Cardiac septum (tissue), 1 donor: ENCODE measurements at regions of chr21 and their contacts with region 1.

Region 1: GRCh38 chr21:20999659-21000058 is 1.4 kb downstream of the NCAM2 start:
- DNase-seq: no peak

Region 2: GRCh38 chr21:21101911-21102310 is 102.3 kb after region 1 on chr21:
- intact Hi-C with region 1: loop called (anchors 5 kb)
- DNase-seq: no peak

Region 3: DNA sequence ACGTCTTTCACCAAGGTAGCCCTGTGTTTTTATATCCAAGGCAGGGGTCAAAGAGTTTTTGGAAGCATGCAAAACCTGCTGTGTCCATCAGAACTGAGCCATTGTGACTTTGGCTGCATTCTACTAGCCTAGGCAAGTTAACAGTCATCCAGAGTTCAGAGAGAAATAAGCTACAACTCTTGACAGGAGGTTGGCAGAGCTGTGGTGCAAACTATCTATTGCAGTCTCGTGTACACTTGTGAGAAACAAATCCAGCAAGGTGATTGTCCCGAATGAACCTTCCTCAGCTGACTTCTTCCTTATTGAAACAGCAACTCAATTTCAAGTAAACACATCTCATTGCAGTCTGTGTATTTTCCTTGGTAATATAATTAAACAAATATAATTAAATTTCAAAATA is 123.0 kb after region 1 on chr21:
- intact Hi-C with region 1: no loop called
- DNase-seq: no peak

Region 4: DNA sequence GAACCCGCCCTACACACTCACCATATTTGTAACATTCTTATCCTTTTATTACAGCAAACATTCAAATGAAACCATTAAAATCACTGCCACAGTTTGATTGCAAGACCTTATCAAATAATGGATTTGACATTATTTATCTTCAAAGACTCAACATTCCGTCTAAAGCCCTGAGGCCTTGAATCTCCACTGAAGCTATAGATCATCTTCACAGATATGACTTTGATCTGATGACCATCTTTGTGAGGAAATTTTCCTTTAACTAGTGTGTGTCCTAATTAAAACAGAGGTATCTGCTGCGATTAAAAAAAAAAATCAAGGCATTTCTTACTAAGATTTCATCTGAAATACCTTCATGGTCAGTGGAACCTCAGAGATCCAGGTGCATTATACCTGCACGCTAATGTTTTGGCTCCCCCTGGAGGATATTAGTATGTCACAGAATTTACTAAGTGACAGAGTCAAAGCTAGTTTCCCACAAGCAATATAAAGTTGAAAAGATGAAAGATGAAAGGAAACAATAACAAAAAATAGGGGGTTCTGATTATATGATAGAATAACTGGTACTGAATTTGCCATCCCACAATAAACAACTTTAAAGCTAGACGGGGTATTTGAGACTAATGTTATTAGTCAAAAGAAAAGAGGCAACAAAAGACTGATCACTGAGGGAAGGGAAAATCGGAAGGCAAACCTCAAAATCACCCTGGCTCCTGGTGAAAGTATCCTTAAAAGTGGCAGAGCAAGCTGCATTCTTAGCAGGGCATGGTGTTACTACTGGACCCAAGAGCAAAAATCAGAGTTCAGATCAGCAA is 922.0 kb after region 1 on chr21:
- intact Hi-C with region 1: loop called (anchors 10 kb)
- DNase-seq: no peak